HEK293T (cell line): ENCODE measurements at regions of chr1 and their contacts with region 1.

Region 1: DNA sequence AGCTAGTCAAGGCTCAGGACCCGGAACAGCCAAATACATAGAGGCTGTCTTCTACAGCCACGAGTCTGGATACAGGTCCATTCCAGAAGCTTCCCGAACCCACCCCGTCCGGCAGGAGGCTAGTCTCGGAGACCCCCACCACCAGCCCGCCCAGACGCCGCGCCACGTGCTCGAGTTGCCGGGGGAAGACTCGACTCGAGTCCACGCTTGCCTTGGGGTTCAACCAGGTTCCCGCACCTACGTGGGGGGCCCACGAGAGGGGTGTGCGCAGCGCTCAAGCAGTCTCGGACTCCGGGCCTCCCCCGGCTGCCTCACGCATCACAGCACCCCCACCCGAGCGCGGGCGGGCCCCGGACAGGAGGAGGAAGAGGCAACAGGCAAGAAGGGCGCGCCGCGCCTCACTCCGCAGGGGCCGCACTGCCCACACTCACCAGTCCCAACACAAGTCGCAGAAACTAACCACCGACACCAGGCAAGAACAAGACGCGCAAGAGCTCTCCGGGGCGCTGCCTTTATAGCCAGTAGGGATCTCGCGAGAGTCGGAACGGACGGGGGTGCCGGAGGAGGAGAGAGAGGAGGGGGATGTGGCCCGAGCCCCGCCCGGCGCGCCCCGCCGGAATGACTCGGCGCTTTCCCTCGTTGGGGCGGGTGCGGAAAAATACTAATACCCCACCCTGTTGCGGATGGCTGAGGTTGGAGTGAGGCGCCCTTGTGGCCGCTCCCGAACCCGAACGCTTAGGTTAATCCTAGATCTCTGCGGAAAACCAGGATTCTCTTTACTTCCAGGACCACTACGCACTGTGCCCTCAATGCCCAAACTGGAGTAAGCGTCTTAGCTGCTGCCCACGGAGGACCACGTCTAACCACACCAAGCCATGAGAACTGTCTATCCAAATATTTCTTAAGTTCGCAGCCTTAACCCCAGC is at the start of gene PRDX1:
- DNase-seq: peak; percentile 96

Region 2: DNA sequence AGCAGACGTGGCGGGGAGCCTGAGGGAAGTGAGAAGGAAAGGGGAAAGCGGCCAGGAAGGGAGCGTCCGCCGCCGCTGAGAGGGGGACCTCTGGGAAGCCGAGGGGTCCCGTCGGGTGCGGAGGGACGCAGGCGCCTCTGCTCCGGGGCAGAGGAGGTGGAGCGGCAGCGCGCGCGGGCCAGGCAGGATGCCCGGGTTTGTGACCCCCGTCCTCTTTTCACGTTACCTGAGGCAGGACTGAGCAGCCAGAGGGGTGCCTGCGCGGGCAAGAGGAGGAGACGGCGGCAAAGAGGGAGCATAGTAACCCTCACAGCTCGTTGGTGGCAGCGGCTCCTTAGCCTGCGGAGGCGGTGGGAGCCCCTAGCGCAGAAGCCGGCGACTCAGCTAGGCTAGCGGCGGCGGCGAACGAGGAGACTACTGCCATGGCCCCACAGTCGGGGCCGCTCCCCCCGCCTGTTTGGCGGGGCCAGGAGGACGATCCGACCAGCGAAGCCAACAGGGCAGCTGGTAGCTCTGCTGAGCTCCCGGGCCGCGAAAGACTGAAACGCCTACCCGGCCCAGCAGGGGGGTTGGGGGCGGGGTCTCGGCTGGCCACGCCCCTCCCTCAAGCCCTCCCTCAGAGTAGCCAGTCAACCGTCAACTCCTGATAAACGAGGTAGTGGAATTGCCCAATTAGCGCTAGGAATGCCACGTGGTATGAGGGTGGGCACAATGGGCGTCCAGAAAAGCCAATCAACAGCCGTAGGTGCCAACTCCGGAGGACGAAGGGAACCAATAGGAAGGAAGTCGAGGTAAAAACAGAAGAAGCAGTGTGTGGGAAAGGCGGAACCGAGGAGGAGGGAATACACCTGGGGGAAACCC is 30.8 kb before region 1 on chr1 and contains the start of gene TESK2:
- CTCF ChIA-PET with region 1: no interaction called
- POLR2A ChIA-PET with region 1: interaction called, 16 read pairs
- DNase-seq: peak; percentile 94

Region 3: DNA sequence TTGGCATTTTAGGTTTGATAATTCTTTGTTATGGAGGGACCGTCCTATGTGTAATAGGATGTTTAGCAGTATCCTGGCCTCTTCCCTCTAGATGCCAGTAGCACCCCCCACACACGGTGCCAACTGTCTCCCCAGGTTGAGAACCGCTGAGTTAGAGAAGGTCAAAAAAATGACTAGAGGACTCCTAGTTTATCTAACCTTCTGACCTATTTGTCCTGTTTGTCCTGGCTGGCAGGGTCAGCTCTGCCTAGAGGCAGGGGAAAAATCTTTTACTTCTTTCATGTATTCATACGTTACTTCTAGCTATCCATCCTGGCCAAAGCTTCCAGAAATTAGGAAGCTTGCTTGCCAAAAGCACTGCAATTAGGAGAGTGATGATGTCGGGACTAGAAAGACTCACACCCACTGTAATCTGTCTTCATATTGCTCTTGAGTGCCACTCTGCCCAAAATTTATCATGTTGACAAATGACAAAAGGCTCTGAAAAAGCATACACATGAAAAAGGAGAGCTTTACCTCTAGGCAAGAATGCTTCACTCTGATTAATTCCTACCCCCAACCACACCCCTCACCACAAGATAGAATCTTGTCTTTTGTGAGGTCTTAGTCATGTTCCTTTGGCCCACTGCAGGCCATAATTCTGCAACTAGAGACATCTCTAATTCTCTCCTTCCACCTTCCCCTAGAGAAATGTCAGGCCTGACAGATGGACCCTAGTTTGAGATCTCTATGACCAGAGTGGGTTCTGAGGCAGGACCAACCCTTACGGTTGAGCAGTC is 14.5 kb after region 1 on chr1:
- CTCF ChIA-PET with region 1: no interaction called
- POLR2A ChIA-PET with region 1: interaction called, 45 read pairs
- DNase-seq: no peak

Region 4: DNA sequence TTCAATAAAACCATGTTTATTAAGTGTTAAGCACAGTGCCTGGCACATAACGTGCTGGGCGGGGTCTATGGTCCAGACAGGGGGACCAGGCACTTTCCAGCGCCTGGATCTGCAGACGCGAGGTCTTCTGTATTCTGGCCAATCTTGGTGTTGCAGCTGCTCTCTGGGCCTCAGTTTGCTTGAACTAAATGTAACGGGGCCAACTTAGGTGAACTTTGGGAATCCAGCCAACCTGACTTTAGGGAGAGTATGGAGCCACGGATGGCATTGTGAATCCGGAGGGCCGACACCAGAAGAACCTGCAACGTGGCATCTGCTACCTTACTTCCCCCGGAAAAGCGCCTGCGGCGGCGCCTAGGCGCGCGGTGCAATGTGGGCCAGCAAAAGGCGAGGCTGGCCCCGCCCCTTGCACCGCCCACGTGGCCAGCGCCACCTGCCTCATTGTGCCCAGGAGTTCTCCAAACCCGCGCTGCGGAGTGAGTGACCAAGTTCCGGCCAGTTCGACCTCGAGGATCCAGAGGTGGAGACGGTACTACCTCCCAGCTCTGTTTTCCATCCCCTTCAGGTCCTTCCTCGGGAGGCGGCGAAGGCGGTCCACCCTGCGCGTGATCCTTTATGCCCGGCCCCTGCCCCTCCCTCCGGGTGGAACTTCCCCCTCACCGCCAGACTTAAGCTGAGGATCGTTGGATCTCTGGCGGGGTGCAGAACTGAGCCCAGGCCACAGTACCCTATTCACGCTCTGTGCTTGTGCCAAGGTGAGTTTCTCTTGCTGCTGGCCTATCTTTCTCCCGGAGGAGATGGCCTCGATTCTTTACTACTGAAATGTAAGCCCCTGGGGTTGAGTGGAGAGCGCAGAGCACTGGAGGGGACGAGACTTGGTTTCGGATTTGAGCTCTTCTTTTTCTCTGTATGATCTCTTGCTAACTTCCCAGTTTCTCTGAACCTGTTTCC is 29.0 kb after region 1 on chr1 and contains the start of gene AKR1A1:
- CTCF ChIA-PET with region 1: no interaction called
- POLR2A ChIA-PET with region 1: interaction called, 68 read pairs
- DNase-seq: peak; percentile 90

Region 5: GRCh38 chr1:45563843-45564242 is 42.2 kb after region 1 on chr1:
- CTCF ChIA-PET with region 1: interaction called, 7 read pairs
- POLR2A ChIA-PET with region 1: interaction called, 40 read pairs
- DNase-seq: no peak

Region 6: DNA sequence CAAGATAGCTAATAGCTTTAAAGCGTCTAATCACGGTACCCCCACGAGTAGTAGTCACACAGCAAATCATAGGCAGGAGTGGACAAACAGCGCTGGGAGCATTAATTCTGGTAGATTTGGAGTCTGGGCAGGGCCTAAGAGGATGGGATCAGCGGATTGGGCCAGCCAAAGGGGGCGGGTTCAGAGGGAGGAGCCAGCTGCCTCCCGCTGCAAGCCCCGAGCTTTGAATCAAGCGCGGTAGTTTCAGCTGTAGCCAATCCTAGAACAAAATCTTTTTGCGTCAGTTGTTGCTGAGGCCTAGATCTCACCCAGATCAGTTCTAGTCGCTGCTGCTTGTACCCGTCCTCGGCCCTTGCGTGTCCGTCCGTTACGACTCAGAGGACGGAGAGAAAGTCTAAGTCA is 61.6 kb after region 1 on chr1:
- CTCF ChIA-PET with region 1: interaction called, 5 read pairs
- POLR2A ChIA-PET with region 1: interaction called, 47 read pairs
- DNase-seq: peak; percentile 98

Region 7: DNA sequence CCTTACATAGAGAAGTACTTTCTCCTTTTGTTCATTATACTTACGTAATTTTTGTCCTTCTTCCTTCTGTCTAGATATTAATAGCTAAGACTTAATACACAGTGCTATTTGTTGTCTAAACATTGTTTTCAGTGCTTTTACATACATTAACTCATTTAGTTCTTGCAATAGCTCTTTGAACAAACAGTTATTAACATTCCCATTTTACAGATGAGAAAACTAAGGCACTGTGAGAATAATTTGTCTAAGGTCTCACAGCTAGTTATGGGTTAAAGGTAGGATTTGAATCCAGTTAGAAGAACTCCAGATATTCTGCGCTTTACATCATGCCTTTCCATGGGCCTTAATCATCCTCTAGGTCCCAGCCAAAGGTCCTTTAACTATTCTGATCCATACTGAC is 82.6 kb after region 1 on chr1:
- CTCF ChIA-PET with region 1: no interaction called
- POLR2A ChIA-PET with region 1: no interaction called
- DNase-seq: no peak